Activated CD8-positive, alpha-beta T cell treated with anti-CD3 and anti-CD28 coated beads for 36 hours (primary cell): ENCODE measurements at regions of chr7 and their contacts with region 1.

Region 1: DNA sequence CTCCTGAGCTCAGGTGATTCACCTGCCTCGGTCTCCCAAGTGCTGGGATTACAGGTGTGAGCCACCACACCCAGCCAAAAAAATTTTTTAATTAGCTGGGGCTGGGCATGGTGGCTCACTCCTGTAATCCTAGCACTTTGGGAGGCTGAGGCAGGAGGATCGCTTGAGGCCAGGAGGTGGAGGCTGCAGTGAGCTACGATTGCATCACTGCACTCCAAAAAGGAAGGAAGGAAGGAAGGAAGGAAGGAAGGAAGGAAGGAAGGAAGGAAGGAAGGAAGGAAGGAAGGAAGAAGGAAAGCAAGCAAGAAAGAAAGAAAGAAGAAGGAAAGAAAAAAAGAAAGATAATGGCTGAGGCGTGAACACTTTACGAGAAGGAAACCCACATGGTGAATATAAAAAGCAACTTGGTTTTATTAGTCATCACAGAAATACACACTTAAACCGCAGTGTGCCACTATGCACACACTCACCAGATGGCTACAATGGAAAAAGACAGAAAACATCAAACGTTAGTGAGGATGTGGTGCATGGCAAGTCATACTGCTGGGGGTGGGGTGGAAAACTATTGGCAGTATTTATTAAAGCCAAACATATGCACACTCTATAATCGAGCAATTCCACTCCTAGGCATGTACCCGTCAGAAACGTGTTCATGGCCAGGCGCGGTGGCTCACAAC is 4.4 kb upstream of the CCL26 start:
- DNase-seq: peak; percentile 86
- ATAC-seq: peak; percentile 91
- H3K4me3 Mint-ChIP-seq: peak overlapping the region; percentile 46
- H3K27ac Mint-ChIP-seq: peak overlapping the region; percentile 85
- H3K4me1 Mint-ChIP-seq: peaks cover 38% of the 10 kb centered on the region
- H3K27me3 Mint-ChIP-seq: peaks cover 16% of the 10 kb centered on the region
- CTCF ChIP-seq: no peak

Region 2: GRCh38 chr7:76011442-76011861 is 235.0 kb after region 1 on chr7:
- CTCF ChIA-PET with region 1: no interaction called
- POLR2A ChIA-PET with region 1: no interaction called
- intact Hi-C with region 1: loop called (anchors 10 kb)
- DNase-seq: no peak
- ATAC-seq: no peak
- H3K4me3 Mint-ChIP-seq: no peak overlapping the region
- H3K27ac Mint-ChIP-seq: no peak overlapping the region
- H3K4me1 Mint-ChIP-seq: peaks cover 31% of the 10 kb centered on the region
- H3K27me3 Mint-ChIP-seq: peaks cover 4% of the 10 kb centered on the region
- CTCF ChIP-seq: no peak